ENCODE measurements at regions of chr2 and their contacts with region 1.

Region 1: GRCh38 chr2:30711646-30712085 is 95.6 kb downstream of the CAPN13 start:
- DNase-seq: peak; percentile 94
- H3K4me3 ChIP-seq: no peak overlapping the region
- H3K27ac ChIP-seq: no peak overlapping the region
- H3K4me1 ChIP-seq: no peaks in the 10 kb centered on the region
- H3K27me3 ChIP-seq: no peaks in the 10 kb centered on the region
- CTCF ChIP-seq: peak; percentile 99

Region 2: DNA sequence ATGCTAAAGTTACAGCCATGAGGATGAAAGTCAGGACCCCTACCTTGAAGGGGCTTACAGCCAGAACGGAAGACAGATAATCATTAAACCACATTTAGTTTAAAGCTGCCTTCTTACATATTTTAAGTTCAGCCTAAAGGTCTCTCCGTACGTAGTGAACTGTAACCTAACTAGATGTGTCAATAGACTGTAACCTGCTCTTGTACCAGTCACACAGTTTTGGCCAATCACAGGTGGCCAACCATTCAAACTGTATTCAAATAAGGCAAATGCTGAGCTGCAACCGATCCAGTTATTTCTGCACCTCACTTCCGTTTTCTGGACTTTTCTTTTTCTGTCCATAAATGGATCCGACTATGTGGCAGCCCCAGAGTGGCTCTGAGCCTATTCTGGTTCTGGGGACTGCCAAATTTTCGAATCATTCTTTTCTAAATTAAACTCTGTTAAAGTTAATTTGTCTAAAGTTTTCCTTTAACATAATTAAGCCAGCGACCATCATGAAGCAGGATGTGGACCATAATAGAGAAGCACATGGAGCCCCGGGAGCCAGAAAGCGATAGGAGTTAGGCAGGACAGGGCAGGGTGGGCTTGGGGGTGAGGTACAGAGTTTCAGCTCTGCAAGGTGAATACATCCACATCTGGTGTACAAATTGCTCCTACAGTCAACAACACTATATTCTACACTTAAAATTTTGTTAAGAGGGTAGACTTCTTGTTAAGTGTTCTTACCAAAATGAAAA is 613.2 kb before region 1 on chr2:
- intact Hi-C with region 1: loop called (anchors 10 kb)
- DNase-seq: no peak
- H3K4me3 ChIP-seq: no peak overlapping the region
- H3K27ac ChIP-seq: no peak overlapping the region
- H3K4me1 ChIP-seq: no peaks in the 10 kb centered on the region
- H3K27me3 ChIP-seq: no peaks in the 10 kb centered on the region
- CTCF ChIP-seq: no peak

Region 3: DNA sequence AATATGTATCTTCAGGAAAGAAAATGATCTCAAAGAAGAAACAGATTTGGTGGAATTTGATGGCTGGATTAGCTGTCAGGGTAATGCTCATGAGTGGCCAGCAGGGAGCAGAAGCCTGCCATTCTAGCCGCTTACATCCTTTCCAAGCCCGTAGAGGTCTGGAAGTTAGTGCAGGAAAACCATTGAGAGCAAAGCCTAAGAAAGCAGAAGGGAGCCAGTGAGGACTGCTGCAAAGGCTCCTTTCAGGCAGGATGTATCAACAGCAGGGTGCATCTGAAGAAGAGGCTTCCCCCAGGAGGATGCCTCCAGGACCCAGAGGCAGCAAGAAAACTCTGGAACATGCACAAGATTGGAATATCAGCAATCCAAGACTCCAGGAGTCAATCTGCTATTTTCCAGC is 503.2 kb before region 1 on chr2:
- intact Hi-C with region 1: loop called (anchors 2 kb)
- DNase-seq: peak; percentile 56
- H3K4me3 ChIP-seq: no peak overlapping the region
- H3K27ac ChIP-seq: no peak overlapping the region
- H3K4me1 ChIP-seq: no peaks in the 10 kb centered on the region
- H3K27me3 ChIP-seq: no peaks in the 10 kb centered on the region
- CTCF ChIP-seq: peak; percentile 82

Region 4: GRCh38 chr2:30775833-30776232 is 64.2 kb after region 1 on chr2:
- intact Hi-C with region 1: no loop called
- DNase-seq: peak; percentile 10
- H3K4me3 ChIP-seq: no peak overlapping the region
- H3K27ac ChIP-seq: no peak overlapping the region
- H3K4me1 ChIP-seq: no peaks in the 10 kb centered on the region
- H3K27me3 ChIP-seq: no peaks in the 10 kb centered on the region
- CTCF ChIP-seq: no peak

Region 5: GRCh38 chr2:31170071-31170698 is 458.5 kb after region 1 on chr2:
- intact Hi-C with region 1: loop called (anchors 5 kb)
- DNase-seq: peak; percentile 42
- H3K4me3 ChIP-seq: no peak overlapping the region
- H3K27ac ChIP-seq: no peak overlapping the region
- H3K4me1 ChIP-seq: no peaks in the 10 kb centered on the region
- H3K27me3 ChIP-seq: no peaks in the 10 kb centered on the region
- CTCF ChIP-seq: peak; percentile 86

Region 6: GRCh38 chr2:31523871-31524492 is 812.3 kb after region 1 on chr2:
- intact Hi-C with region 1: loop called (anchors 10 kb)
- DNase-seq: peak; percentile 74
- H3K4me3 ChIP-seq: no peak overlapping the region
- H3K27ac ChIP-seq: no peak overlapping the region
- H3K4me1 ChIP-seq: no peaks in the 10 kb centered on the region
- H3K27me3 ChIP-seq: no peaks in the 10 kb centered on the region
- CTCF ChIP-seq: peak; percentile 76

Measured in colonic mucosa (tissue), 4 donors.